PC-9 (cell line): ENCODE measurements at regions of chr1 and their contacts with region 1.

Region 1: DNA sequence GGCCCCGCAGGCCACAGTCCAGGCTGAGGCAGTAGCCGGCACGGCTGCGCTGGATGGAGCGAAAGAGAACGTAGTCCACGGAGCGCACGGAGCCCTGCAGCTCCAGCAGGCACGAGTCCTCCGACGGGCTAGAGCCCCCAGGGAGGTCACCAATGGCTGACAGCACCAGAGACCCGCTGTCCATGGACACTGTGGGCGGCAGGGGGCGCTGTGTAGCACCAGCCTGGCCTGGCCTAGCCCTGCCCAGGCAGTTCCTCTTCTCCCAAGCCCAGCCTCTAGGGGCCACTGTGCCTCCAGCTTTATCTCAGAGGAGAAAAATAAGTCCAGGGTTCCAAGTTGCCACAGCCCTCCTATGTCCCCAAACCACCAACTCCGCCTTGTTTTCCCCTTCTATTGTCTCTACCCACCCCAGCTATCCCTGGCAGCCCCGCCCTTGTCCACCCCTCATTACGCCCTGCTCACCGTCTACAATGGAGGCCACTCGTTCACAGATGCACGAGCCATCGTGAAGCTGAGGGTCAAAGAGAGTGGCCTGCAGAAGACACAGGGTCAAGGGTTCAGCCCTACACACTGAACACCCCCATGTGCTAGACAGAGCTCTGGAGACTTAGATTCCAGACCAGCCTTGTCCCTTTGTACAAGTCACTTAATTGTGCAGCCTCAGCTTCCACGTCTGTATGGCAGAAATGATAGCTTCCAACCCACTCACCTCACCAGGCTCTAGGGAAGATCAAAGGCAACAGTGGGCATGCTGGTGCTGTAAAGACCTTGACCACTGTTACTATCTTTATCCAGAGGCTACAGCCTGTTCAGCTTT is 4.4 kb downstream of the ENTREP3 start:
- DNase-seq: peak; percentile 70 to 88
- H3K4me3 ChIP-seq: no peak overlapping the region
- H3K27ac ChIP-seq: no peak overlapping the region
- H3K4me1 ChIP-seq: peaks cover 13% of the 10 kb centered on the region
- H3K27me3 ChIP-seq: no peaks in the 10 kb centered on the region
- CTCF ChIP-seq: peak; percentile 96

Region 2: DNA sequence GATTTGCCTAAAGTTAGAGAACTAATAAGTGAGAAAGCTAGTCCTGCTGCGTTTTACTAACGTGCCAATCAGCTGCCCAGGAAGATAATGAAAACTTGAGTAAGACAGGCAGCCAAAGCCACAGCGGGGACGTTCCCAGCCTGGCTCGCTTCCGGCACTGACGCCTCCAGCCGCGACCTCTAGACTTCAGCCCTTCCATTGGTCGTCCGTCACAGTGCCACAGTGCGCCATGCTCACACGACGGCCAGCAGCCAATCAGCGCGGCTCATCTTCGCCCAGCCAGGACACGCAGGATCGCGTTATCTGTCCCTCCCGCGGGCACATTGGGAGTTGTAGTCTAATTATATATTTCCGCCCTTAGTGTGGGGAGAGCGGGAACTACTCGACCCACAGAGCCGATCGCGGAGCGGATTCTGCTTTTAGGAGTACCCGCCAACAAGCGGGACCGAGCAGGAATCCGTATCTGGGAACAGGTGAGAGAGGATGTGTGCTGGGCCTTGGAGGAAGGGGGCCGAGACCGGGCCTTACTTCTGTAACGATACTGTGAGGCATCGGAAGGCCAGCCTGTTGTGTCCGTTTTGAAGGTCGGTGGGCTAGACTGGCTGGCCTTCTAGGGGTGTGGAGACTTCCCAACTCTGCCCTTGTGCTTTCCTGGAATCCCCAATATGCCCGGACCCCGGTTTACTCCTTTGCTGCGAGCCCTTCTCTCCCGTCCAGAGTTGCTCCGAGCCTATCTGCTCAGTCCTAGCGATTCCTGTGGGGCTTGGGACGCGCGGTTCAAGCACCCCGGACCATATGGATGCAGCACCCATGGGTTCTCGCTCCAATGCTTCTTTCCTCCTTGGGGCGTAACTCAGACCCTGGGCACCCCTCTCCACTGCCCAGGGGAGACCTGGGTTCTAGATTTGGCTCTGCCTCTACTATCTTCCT is 57.9 kb after region 1 on chr1 and contains the start of gene FDPS:
- CTCF ChIA-PET with region 1: no interaction called
- POLR2A ChIA-PET with region 1: no interaction called
- intact Hi-C with region 1: no loop called
- DNase-seq: peak; percentile 97
- H3K4me3 ChIP-seq: peak within 1 kb of the TSS; percentile 88
- H3K27ac ChIP-seq: peak within 1 kb of the TSS; percentile 91
- H3K4me1 ChIP-seq: peaks cover 26% of the 10 kb centered on the region
- H3K27me3 ChIP-seq: no peaks in the 10 kb centered on the region
- CTCF ChIP-seq: no peak
- total RNA-seq, gene FDPS: 397 and 568 TPM in 2 replicates

Region 3: GRCh38 chr1:155504207-155504606 is 253.4 kb after region 1 on chr1:
- CTCF ChIA-PET with region 1: interaction called, 5 read pairs
- POLR2A ChIA-PET with region 1: no interaction called
- intact Hi-C with region 1: loop called (anchors 10 kb)
- DNase-seq: peak in 1 of 2 experiments; percentile 37
- H3K4me3 ChIP-seq: no peak overlapping the region
- H3K27ac ChIP-seq: no peak overlapping the region
- H3K4me1 ChIP-seq: no peaks in the 10 kb centered on the region
- H3K27me3 ChIP-seq: no peaks in the 10 kb centered on the region
- CTCF ChIP-seq: peak; percentile 50; the same call in 1 of the 2 replicates